ENCODE measurements at regions of chr6 and their contacts with region 1.

Region 1: DNA sequence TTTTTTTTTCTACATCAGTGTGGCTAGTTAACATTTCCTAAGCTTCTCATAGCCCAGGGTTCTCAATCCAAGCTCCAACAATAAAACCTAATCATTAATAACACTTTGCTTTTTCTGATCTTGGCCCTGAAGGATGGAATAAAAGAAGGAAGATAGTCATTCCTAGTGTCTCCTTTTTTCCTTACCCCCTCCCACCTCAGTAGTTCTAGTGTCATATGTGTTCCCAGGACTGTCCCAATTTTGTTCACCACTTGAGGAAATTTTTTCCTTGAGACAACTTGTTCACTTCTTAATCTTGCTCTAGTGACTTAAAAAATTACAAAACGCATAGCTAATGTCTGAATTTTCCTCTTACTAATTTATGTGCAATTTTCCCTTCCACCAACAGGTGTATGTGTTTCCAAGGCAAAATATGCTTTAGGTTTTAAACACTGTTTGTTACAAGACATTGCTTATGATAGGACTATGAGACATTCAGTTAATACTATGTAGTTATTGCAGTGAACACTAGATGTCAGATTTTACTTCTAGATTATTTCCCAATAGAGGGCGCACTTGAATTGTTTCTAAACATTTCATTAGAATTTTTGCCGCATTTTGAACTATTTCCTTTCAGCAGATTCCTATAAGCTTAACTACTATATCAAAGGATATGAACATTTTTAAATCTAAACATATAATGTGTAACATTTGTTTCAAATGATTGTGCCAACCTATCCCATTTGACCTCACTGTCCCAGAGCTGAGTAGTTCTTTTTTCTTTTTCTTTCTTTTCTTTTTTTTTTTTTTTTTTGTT is 18.5 kb upstream of the C6orf141 start:
- H3K4me3 ChIP-seq: no peak overlapping the region
- H3K27ac ChIP-seq: no peak overlapping the region
- H3K4me1 ChIP-seq: no peaks in the 10 kb centered on the region
- CTCF ChIP-seq: peak; percentile 86

Region 2: DNA sequence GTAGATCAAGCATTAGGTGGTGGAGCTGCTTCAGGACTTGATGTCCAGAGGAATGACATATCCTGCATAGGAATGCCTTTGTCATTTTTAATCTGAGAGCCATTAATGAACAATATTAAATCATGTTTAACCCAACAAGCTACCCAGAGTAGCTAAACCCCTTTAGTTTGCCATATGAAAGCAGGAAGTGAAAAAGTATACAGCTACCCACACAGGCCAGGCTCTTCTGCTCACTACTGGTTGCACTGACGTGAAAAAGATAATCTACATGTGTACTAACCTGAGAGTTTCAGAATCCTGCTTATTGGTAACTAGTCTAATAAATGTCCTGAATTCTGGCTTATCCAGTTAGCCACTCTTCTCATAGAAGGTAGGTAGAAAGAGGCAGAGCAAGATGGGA is 12.3 kb before region 1 on chr6:
- CTCF ChIA-PET with region 1: interaction called, 31 read pairs
- POLR2A ChIA-PET with region 1: no interaction called
- H3K4me3 ChIP-seq: no peak overlapping the region
- H3K27ac ChIP-seq: no peak overlapping the region
- H3K4me1 ChIP-seq: no peaks in the 10 kb centered on the region
- CTCF ChIP-seq: no peak

Region 3: DNA sequence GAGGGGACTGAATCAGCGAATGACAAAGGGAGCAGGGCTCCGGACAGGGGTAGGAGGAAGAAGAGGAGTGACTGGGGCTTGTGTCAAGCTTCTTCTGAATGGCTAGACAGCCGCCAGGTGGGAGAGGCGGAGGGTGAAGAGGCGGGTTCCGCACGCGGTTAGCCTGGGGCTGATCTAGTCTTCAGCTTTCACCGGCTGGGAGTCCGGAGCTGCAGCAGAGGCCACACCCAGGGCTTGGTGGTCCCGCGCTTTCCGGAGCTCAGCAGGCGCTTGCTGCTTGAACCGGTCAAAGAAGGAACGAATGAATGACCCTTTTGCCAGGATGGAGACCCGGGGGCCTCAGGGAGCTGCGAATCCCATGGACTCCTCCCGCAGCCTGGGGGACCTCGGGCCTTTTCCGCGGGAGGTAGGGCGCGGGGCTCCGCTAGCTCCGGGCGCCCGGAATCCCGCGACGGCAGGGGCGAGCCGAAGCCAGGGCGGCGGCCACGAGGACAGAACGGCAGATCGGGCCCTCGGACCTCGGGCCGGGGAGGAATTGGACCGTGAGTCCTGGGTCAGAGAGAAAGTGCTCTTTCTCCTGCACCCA is 18.6 kb after region 1 on chr6 and contains the start of gene C6orf141:
- CTCF ChIA-PET with region 1: interaction called, 35 read pairs
- POLR2A ChIA-PET with region 1: interaction called, 19 read pairs
- H3K4me3 ChIP-seq: peak within 1 kb of the TSS; percentile 75
- H3K27ac ChIP-seq: peak within 1 kb of the TSS; percentile 86
- H3K4me1 ChIP-seq: peaks cover 2% of the 10 kb centered on the region; the same call in 1 of the 2 replicates
- CTCF ChIP-seq: no peak; the same call in 1 of the 2 replicates

Region 4: GRCh38 chr6:49570474-49571079 is 38.6 kb after region 1 on chr6:
- CTCF ChIA-PET with region 1: interaction called, 16 read pairs
- POLR2A ChIA-PET with region 1: no interaction called
- H3K4me3 ChIP-seq: no peak overlapping the region
- H3K27ac ChIP-seq: no peak overlapping the region
- H3K4me1 ChIP-seq: peaks cover 15% of the 10 kb centered on the region
- CTCF ChIP-seq: no peak

Region 5: DNA sequence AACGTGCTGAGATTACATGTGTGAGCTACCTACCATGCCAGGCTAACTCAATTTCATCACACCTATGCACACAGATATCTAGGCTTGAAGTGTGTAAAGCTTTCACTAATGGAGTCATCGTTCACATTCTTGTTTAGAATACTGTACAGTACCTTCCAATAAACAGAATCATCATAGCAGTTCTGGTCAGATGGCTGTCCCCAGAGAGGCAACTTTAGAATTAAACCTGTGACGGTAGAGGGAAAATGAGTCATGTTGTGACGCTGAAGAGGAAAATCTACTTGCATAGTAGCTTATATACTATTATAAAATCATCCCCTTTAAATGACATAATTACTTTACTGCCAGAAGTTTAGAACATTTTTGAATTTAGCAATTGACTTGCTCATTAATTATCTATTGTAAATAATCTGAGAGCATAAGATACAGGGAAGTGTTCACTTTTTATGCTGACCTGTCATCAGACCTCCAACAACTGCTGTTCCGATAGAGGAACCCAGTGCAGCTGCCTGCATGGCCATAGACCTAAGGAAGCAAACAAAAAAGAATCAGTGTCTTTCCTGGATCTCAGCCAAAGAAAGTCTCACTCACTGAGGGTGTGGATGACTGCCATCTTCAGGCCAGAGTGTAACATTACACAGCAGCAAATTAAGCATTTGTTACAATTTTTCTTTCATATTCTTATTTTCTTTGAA is 74.9 kb after region 1 on chr6:
- CTCF ChIA-PET with region 1: interaction called, 234 read pairs
- POLR2A ChIA-PET with region 1: interaction called, 4 read pairs
- H3K4me3 ChIP-seq: no peak overlapping the region
- H3K27ac ChIP-seq: no peak overlapping the region
- H3K4me1 ChIP-seq: no peaks in the 10 kb centered on the region
- CTCF ChIP-seq: no peak

Region 6: DNA sequence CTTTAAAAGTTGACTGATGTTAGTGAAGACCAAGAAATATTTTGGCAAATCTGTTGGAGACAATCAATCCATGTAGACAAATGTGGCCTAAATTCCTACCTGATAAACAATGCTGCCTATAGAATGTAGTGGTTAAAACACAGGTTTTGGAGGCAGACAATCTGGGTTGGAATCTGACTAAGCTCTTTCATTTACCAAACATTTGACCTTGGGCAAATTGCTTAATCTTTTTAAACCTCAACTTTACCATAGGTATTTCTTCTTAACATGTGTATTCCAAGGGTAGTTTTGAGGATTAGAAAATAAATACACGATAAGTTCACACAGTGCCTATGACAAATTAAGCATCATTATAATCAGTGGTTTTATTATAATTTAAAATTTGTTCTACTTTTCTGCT is 93.2 kb after region 1 on chr6:
- CTCF ChIA-PET with region 1: interaction called, 48 read pairs
- POLR2A ChIA-PET with region 1: no interaction called
- H3K4me3 ChIP-seq: no peak overlapping the region
- H3K27ac ChIP-seq: no peak overlapping the region
- H3K4me1 ChIP-seq: no peaks in the 10 kb centered on the region
- CTCF ChIP-seq: no peak

Region 7: DNA sequence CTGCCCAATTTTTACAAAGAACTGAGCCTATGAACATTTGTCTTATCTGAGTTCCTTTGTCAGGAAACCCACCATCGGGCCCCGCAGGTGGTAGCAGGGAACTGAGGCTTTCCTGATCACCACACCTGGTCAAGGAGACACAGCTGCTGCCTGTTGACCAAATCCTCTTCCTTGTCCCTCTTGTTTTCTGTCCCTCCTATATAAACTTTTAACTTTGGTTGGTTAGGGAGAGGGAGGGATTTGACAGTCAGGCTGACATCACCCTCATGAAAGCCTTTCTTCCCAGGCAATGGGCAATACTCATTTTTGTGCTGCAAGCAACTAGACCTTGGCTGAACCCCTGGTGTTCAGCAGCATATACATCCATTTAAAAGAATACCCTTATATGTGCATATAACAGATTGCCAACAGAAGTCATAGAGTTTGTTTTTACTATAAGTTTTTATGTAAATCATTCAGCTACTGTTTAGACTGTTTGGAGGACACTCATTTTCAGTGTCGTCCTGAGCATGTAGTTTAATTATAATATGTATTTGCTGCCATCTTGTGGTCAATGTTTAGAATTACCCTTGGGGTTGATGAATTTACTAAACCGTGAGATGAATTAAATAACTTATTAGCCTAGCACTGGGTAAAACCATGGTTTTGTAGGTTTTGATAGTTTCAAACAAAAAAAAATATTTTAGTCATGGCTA is 317.4 kb after region 1 on chr6:
- CTCF ChIA-PET with region 1: interaction called, 64 read pairs
- POLR2A ChIA-PET with region 1: no interaction called
- H3K4me3 ChIP-seq: no peak overlapping the region
- H3K27ac ChIP-seq: no peak overlapping the region
- H3K4me1 ChIP-seq: no peaks in the 10 kb centered on the region
- CTCF ChIP-seq: no peak

Measured in HEK293 (cell line).